ENCODE measurements at regions of chr19 and their contacts with region 1.

Region 1: GRCh38 chr19:54209811-54210494 is 9.3 kb downstream of the RPS9 start:
- DNase-seq: peak; percentile 87 to 95 (median 89)
- H3K4me3 ChIP-seq: peak overlapping the region; percentile 3 to 58 (median 25)
- H3K4me3 Mint-ChIP-seq: peak overlapping the region; percentile 68 to 88
- H3K27ac ChIP-seq: peak overlapping the region; percentile 97 to 100
- H3K27ac Mint-ChIP-seq: peak overlapping the region; percentile 99 to 100 (median 100)
- H3K4me1 ChIP-seq: peaks cover 67 to 75% of the 10 kb centered on the region in 2 donors
- H3K4me1 Mint-ChIP-seq: peaks cover 81% of the 10 kb centered on the region
- H3K27me3 ChIP-seq: no peaks in the 10 kb centered on the region
- H3K27me3 Mint-ChIP-seq: peaks cover 0 to 13% (median 2%) of the 10 kb centered on the region in 3 donors
- CTCF ChIP-seq: no peak

Region 2: DNA sequence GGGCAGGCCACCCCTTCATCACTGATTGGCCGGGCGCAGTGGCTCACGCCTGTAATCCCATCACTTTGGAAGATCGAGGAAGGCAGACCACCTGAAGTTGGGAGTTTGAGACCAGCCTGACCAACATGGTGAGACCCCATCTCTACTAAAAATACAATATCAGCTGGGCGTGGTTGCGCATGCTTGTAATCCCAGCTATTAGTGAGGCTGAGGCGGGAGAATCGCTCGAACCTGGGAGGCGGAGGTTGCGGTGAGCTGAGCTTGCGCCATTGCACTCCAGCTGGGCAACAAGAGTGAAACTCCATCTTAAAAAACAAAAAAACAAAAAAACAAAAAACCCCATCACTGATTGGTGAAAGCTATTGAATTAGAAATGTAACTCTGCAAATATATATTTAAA is 711.4 kb before region 1 on chr19:
- intact Hi-C with region 1: no loop called
- DNase-seq: no peak
- H3K4me3 ChIP-seq: no peak overlapping the region
- H3K4me3 Mint-ChIP-seq: no peak overlapping the region
- H3K27ac ChIP-seq: no peak overlapping the region
- H3K27ac Mint-ChIP-seq: no peak overlapping the region
- H3K4me1 ChIP-seq: no peaks in the 10 kb centered on the region
- H3K4me1 Mint-ChIP-seq: no peaks in the 10 kb centered on the region
- H3K27me3 ChIP-seq: no peaks in the 10 kb centered on the region
- H3K27me3 Mint-ChIP-seq: no peaks in the 10 kb centered on the region
- CTCF ChIP-seq: no peak

Region 3: GRCh38 chr19:54231077-54231931 is 21.4 kb after region 1 on chr19:
- intact Hi-C with region 1: loop called in 1 of 2 experiments (anchors 2 kb)
- DNase-seq: peak; percentile 57 to 88 (median 83)
- H3K4me3 ChIP-seq: no peak overlapping the region
- H3K4me3 Mint-ChIP-seq: peak overlapping the region in 1 of 2 donors; percentile 26
- H3K27ac ChIP-seq: no peak overlapping the region
- H3K27ac Mint-ChIP-seq: peak overlapping the region in 5 of 7 donors; percentile 46 to 88 (median 67)
- H3K4me1 ChIP-seq: peaks cover 14 to 20% of the 10 kb centered on the region in 2 donors
- H3K4me1 Mint-ChIP-seq: peaks cover 21% of the 10 kb centered on the region
- H3K27me3 ChIP-seq: peaks cover 0 to 13% of the 10 kb centered on the region in 2 donors
- H3K27me3 Mint-ChIP-seq: peaks cover 6 to 8% (median 7%) of the 10 kb centered on the region in 3 donors
- CTCF ChIP-seq: peak; percentile 89

Region 4: DNA sequence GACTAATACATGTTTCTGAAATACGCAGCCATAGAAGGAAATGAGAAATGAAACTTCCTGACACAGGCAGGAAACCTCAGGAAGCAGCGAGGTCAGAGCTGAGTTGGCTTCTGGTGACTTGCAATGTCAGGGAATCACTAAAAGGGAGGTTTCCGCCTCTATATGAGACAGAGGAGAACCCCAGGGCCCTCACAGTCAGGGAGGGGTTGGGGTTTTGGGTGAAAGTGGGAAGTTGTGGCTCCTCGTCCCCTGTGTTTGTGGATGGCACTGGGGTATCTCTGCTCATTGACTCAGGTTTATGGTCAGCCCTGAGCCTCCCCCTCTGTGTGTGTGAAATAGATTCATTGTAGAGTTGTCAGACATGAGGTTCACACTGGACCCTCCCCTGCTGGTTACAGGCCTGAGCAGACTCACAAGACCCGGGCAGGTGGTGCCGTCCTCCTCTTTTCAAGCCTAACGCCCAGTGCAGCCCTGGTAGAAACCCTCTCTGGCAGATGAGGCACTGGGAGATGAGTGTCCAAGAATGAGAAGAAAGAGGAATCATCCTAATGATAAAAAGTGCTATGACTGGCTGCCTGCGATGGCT is 38.2 kb after region 1 on chr19:
- intact Hi-C with region 1: loop called in 1 of 2 experiments (anchors 5 kb)
- DNase-seq: peak; percentile 94 to 98 (median 98)
- H3K4me3 ChIP-seq: peak overlapping the region in 1 of 3 experiments; percentile 56
- H3K4me3 Mint-ChIP-seq: peak overlapping the region; percentile 58 to 82
- H3K27ac ChIP-seq: peak overlapping the region; percentile 54 to 92
- H3K27ac Mint-ChIP-seq: peak overlapping the region; percentile 95 to 99 (median 98)
- H3K4me1 ChIP-seq: peaks cover 48 to 50% of the 10 kb centered on the region in 2 donors
- H3K4me1 Mint-ChIP-seq: peaks cover 48% of the 10 kb centered on the region
- H3K27me3 ChIP-seq: peaks cover 0 to 1% of the 10 kb centered on the region in 2 donors
- H3K27me3 Mint-ChIP-seq: peaks cover 4 to 16% (median 16%) of the 10 kb centered on the region in 3 donors
- CTCF ChIP-seq: no peak

Region 5: DNA sequence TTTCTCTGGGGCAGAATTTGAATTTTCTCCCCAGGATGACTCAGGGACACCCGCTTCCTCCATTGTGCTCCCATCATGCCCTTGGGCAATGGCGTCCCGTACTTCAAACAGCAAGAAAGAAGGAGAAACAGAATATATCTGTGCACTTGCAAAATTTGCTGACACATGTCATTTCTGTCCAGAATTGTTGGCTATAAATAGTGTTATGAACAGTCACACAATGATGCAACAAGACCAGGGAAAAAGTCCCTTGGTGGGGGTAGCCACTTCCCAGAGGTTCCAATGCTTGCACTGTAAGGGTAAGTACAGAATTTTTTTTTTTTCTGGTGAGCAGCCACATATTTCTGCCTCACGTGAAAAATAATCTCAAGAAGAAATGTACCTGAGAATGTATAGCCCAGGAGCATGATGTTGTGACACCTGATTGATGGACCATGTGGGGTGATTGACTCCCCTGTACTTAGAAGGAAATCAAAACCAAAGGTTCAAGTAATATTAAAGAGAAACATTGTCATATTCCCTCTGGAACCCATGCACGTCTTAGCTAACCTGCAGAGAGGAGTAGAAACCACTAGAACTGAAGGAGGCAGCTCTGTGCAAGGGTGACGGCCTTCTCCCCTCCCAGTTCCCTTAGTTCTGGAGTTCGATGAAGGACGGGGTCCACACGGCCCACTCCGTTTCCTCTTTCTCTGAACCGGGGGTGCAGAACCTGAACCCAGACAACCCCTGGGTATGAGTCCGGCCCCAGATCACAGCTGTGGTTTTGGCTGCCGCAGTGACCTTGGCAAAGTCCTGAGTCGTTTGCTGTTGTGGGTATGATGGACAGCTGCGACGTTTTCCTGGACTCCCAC is 164.1 kb after region 1 on chr19:
- intact Hi-C with region 1: loop called in 1 of 2 experiments (anchors 5 kb)
- DNase-seq: peak; percentile 96 to 99 (median 98)
- H3K4me3 ChIP-seq: peak overlapping the region in 1 of 3 experiments; percentile 58
- H3K4me3 Mint-ChIP-seq: peak overlapping the region; percentile 71 to 74
- H3K27ac ChIP-seq: peak overlapping the region; percentile 93 to 98
- H3K27ac Mint-ChIP-seq: peak overlapping the region; percentile 96 to 99 (median 98)
- H3K4me1 ChIP-seq: peaks cover 91 to 96% of the 10 kb centered on the region in 2 donors
- H3K4me1 Mint-ChIP-seq: peaks cover 82% of the 10 kb centered on the region
- H3K27me3 ChIP-seq: no peaks in the 10 kb centered on the region
- H3K27me3 Mint-ChIP-seq: peaks cover 0 to 4% (median 0%) of the 10 kb centered on the region in 3 donors
- CTCF ChIP-seq: no peak